Activated CD4-positive, alpha-beta memory T cell treated with anti-CD3 and anti-CD28 coated beads for 36 hours (primary cell): ENCODE measurements at regions of chr2 and their contacts with region 1.

Region 1: DNA sequence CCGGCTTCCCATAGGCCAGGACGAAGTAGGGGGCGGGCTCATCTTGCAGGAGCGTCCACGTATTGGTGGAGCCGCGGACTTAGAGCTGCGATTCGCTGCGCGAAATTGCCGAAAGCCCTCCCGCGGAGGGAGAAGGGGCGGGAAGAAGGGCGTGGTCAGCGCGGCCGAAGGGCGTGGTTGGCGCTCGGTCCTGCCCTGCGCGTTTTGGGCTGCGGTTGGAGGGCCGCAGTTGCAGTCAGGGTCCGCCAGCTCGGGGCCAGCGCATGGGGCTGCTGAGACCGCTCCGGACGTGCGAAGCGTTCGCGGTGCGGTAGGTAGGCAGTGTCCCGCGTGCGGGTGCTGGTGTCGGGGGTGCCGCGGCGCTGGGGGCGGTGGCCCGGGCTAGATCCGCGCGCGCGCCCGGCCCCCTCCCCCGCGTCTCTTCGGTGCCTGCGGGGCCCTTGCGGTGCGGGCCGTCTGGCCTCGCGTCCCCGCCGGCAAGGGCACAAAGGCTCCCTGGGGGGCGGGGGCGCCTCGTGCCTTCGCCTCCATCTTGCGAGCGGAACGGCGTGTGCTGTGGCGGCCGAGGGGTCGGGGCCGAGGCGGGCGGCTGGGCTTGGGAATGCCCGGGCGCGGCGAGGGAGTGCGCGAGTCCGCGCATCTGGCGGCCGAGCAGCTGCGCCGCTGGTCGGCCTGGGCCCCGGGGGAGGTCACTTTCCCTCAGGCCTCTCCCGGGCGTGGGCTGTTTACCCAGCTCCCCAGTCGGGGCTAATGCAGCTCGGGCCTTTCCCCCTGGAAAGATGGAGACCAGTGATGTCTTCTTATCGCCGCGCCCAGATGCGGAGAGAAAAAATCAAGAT is at the start of gene CEP68:
- DNase-seq: peak; percentile 98
- H3K4me3 Mint-ChIP-seq: peak within 1 kb of the TSS; percentile 94
- H3K27ac Mint-ChIP-seq: peak within 1 kb of the TSS; percentile 78
- H3K4me1 Mint-ChIP-seq: peaks cover 50% of the 10 kb centered on the region
- H3K27me3 Mint-ChIP-seq: no peaks in the 10 kb centered on the region
- total RNA-seq, gene CEP68: 6.6 to 8.0 TPM

Region 2: DNA sequence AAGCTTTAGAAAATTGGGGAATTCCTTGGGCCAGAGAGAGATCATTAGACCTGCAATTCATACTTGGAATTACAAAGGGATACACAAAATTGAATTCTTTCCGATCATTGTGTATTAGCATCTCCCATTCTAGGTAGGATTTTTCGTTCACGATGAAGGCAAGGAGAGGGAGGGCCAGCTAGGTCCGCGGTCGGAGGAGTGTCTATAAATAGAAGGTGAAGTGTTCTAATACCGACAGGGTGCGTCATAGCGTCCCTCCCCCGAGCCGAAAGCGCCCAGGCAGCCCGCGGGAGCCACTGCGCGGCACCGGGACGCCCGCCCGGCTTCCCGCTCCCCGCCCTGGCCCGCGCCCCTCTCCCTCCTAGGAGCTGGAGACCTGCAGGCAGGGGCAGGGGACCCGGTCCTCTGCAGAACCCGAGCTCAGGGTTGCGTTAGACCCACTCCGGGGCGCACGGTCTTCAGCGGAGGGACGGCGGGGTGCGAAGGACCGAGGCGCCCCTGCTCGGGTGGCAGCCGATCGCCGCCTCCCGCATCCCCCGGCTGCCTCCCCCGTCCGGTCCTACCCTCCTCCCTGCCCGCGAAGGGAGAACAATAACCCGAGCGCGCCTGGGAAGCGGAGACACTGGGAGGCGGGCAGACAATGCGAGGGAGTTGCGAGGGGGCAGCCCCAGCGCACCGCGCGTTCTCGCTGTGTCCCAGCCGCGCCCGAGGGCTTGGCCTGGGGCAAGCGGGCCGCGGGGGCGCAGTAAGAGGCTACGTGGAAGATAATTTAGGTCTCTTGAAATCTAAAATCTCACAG is 288.6 kb before region 1 on chr2:
- CTCF ChIA-PET with region 1: no interaction called
- POLR2A ChIA-PET with region 1: no interaction called
- intact Hi-C with region 1: loop called (anchors 5 kb)
- DNase-seq: peak; percentile 84
- H3K4me3 Mint-ChIP-seq: peak overlapping the region; percentile 80
- H3K27ac Mint-ChIP-seq: peak overlapping the region; percentile 77
- H3K4me1 Mint-ChIP-seq: peaks cover 19% of the 10 kb centered on the region
- H3K27me3 Mint-ChIP-seq: no peaks in the 10 kb centered on the region

Region 3: GRCh38 chr2:64988420-64989125 is 67.9 kb before region 1 on chr2:
- CTCF ChIA-PET with region 1: interaction called, 6 read pairs
- POLR2A ChIA-PET with region 1: interaction called, 19 read pairs
- intact Hi-C with region 1: loop called (anchors 1 kb)
- DNase-seq: peak; percentile 81
- H3K4me3 Mint-ChIP-seq: peak overlapping the region; percentile 59
- H3K27ac Mint-ChIP-seq: peak overlapping the region; percentile 65
- H3K4me1 Mint-ChIP-seq: peaks cover 54% of the 10 kb centered on the region
- H3K27me3 Mint-ChIP-seq: peaks cover 5% of the 10 kb centered on the region

Region 4: DNA sequence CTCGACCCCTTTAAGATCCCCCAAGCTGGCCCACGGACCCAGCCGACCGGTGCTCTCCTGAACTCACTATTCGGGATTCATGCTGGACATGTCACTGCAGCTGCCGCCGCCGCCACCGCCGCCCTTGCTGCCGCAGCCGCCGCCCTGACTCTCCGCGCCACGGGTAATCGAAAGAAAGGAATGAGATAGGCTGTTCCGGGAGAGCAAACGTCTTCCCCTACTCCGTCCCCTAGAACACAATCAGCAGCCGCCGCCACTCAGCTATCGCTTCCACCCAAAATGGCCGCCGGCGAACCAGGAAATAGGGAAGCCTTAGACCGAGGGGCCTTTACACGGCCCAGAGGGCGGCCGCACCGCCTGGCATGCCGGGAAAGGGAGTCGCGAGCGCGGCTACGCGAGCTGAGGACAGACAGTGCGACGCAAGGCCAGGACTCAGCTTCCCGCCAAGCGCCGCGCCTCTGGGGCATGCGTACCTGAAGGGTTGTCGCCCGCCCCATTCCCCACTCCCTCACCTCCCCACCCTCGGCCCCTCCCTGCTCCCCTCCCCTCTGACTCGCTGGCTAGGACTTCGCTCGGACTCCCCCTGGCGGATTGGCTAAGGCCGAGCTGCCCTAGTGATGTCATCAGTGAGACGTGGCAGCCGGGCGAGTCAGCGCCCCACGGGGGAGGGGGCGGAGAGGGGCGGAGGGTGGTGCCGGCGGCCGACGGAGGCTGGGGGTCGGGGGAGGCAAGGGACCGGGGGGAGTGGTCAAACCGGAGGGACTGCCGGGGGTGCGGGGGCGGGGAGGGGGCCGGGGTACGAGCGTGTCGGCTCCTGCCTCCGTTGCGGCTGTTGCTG is 73.6 kb after region 1 on chr2 and contains the start of gene RAB1A:
- CTCF ChIA-PET with region 1: interaction called, 7 read pairs
- POLR2A ChIA-PET with region 1: interaction called, 24 read pairs
- intact Hi-C with region 1: loop called (anchors 1 kb)
- DNase-seq: peak; percentile 100
- H3K4me3 Mint-ChIP-seq: peak within 1 kb of the TSS; percentile 96
- H3K27ac Mint-ChIP-seq: peak within 1 kb of the TSS; percentile 95
- H3K4me1 Mint-ChIP-seq: peaks cover 34% of the 10 kb centered on the region
- H3K27me3 Mint-ChIP-seq: no peaks in the 10 kb centered on the region
- total RNA-seq, gene RAB1A: 84.3 to 84.5 TPM

Region 5: GRCh38 chr2:65227425-65228262 is 171.2 kb after region 1 on chr2 and contains the start of gene ACTR2:
- CTCF ChIA-PET with region 1: interaction called, 5 read pairs
- POLR2A ChIA-PET with region 1: interaction called, 9 read pairs
- intact Hi-C with region 1: loop called (anchors 1 kb)
- DNase-seq: peak; percentile 97
- H3K4me3 Mint-ChIP-seq: peak within 1 kb of the TSS; percentile 100
- H3K27ac Mint-ChIP-seq: peak within 1 kb of the TSS; percentile 99
- H3K4me1 Mint-ChIP-seq: peaks cover 32% of the 10 kb centered on the region
- H3K27me3 Mint-ChIP-seq: no peaks in the 10 kb centered on the region
- total RNA-seq, gene ACTR2: 401 to 406 TPM